ENCODE measurements at regions of chr1 and their contacts with region 1.

Region 1: DNA sequence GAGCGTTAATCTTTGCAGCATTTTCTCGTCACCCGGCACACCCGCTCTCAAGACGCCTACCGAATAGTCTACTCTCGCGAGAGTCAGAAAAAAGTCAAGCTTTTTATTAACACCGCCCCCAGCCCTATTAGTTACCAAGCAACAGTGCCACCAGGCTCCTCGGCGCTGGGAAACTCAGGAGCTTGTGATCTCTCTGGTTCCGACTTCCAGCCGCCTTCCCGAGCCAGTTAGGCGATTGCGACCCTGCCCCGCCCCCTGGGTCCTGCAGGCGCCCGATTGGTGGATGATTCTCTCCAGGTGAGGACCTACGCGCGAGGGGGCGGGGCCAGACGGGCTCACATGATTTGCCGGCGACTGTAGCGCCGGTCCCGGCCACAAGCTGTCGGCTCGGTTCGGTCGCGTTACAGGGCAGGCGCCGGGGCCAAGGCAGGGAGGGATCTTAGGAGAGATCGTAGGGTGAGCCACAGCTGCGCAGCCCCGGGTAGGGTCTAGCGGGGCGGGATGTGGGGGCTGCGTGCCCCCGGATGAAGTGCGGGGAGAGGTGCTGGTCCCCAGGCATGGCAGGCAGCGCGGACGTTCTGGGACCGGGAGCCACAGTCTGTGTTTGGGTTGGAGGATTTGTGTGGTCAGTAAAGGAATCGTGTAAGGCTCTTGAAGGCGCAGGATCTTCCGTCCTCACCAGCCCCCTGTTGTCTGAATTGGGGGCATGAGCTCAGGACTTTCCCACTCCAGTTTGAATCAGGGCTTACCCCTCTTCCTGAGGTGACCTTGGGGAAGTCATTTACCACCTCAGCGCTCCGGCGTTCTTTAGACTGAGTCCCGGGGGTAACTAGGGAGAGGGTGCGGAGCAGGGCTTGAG is at the start of gene PFKFB2:
- DNase-seq: peak; percentile 100
- ATAC-seq: peak; percentile 81
- H3K4me3 ChIP-seq: peak within 1 kb of the TSS; percentile 78
- H3K27ac ChIP-seq: peak within 1 kb of the TSS; percentile 95
- H3K4me1 ChIP-seq: peaks cover 55% of the 10 kb centered on the region
- H3K27me3 ChIP-seq: no peaks in the 10 kb centered on the region
- CTCF ChIP-seq: peak; percentile 35; the same call in 1 of the 2 replicates
- total RNA-seq, gene PFKFB2: 37.5 and 48.6 TPM in 2 replicates

Region 2: GRCh38 chr1:206684478-206685333 is 368.4 kb before region 1 on chr1 and contains the start of gene MAPKAPK2:
- CTCF ChIA-PET with region 1: no interaction called
- POLR2A ChIA-PET with region 1: no interaction called
- intact Hi-C with region 1: loop called (anchors 10 kb)
- DNase-seq: peak; percentile 76
- ATAC-seq: peak; percentile 69
- H3K4me3 ChIP-seq: peak within 1 kb of the TSS; percentile 85
- H3K27ac ChIP-seq: peak within 1 kb of the TSS; percentile 65
- H3K4me1 ChIP-seq: peaks cover 28% of the 10 kb centered on the region
- H3K27me3 ChIP-seq: peaks cover 13% of the 10 kb centered on the region
- CTCF ChIP-seq: no peak
- total RNA-seq, gene MAPKAPK2: 98.5 and 133 TPM in 2 replicates

Region 3: DNA sequence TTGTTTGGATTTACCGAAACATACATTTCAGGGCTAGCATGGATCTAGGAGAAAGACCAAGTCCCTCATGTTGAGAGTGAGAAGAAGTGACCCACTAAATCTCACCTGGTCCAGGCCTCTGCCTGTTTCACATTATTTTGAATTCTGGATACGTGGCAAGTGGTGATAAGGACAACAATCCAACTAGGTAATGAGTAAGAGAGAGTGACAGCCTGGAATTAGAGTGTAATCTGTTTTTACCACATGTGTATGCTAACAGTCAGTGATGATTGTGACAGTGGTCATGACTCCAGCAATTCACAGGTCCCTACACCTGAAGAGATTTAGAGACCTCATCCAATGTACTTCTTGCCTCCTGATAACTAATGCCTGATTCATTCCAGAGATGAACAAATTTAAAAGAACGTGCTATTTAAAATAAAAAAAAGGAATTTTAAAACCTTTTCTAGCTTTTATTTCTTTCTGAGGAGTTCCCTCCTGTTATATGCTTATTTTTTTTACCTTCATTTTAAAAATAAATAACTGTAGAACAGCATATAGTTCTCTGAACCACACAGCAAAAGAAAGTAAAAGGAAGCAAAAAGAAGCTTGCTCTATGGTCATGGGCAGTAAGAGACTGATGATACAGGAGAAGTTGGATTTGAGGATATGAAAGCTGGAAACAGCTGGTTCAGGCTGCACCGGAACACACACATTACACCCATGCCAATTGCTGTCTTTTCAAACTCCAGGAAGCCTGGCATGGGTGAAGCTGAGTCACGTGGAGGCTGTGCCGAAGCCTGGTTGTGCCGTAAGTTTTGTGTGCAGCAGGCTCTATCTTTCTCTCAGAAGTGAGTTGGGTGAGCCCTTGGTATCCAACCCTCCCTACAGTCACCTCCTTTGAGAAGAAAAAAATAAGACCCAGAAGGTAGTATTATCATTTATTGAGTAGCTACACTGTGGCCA is 35.3 kb before region 1 on chr1:
- CTCF ChIA-PET with region 1: interaction called, 4 read pairs
- POLR2A ChIA-PET with region 1: interaction called, 11 read pairs
- intact Hi-C with region 1: loop called (anchors 1 kb)
- DNase-seq: peak; percentile 97
- ATAC-seq: peak; percentile 50
- H3K4me3 ChIP-seq: no peak overlapping the region
- H3K27ac ChIP-seq: peak overlapping the region; percentile 95
- H3K4me1 ChIP-seq: peaks cover 55% of the 10 kb centered on the region
- H3K27me3 ChIP-seq: no peaks in the 10 kb centered on the region
- CTCF ChIP-seq: no peak

Region 4: GRCh38 chr1:207032528-207033017 is 20.6 kb before region 1 on chr1 and contains the start of gene C1orf116:
- CTCF ChIA-PET with region 1: interaction called, 5 read pairs
- POLR2A ChIA-PET with region 1: interaction called, 81 read pairs
- intact Hi-C with region 1: loop called (anchors 1 kb)
- DNase-seq: peak; percentile 99
- ATAC-seq: peak; percentile 63
- H3K4me3 ChIP-seq: peak within 1 kb of the TSS; percentile 69
- H3K27ac ChIP-seq: peak within 1 kb of the TSS; percentile 95
- H3K4me1 ChIP-seq: peaks cover 88% of the 10 kb centered on the region
- H3K27me3 ChIP-seq: no peaks in the 10 kb centered on the region
- CTCF ChIP-seq: no peak
- total RNA-seq, gene C1orf116: 34.9 and 36.2 TPM in 2 replicates

Region 5: DNA sequence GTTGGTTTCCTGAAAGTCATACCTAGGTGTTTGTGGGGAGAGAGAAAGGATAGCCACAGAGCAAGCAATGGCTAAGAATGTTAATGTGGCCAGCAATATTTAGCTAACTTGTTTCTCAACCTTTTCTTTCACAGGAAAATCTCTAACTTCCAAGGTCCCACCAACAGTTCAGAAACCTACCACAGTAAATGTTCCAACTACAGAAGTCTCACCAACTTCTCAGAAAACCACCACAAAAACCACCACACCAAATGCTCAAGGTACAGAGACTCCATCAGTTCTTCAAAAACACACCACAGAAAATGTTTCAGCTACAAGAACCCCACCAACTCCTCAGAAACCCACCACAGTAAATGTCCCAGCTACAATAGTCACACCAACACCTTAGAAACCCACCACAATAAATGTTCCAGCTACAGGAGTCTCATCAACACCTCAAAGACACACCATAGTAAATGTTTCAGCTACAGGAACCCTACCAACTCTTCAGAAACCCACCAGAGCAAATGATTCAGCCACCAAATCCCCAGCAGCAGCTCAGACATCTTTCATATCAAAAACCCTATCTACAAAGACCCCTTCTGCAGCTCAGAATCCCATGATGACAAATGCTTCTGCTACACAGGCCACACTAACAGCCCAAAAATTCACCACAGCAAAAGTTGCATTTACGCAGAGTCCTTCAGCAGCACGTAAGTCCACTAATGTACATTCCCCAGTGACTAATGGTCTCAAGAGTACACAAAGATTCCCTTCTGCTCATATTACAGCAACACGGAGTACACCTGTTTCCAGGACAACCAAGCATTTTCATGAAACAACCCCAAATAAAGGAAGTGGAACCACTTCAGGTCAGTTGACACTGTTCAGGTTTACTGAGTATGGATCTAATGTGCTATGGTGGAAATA is 283.7 kb after region 1 on chr1:
- CTCF ChIA-PET with region 1: no interaction called
- POLR2A ChIA-PET with region 1: interaction called, 13 read pairs
- intact Hi-C with region 1: no loop called
- DNase-seq: peak; percentile 97
- ATAC-seq: peak; percentile 98
- H3K4me3 ChIP-seq: no peak overlapping the region
- H3K27ac ChIP-seq: peak overlapping the region; percentile 74
- H3K4me1 ChIP-seq: peaks cover 21% of the 10 kb centered on the region
- H3K27me3 ChIP-seq: no peaks in the 10 kb centered on the region
- CTCF ChIP-seq: no peak